ENCODE measurements at regions of chr9 and their contacts with region 1.

Region 1: DNA sequence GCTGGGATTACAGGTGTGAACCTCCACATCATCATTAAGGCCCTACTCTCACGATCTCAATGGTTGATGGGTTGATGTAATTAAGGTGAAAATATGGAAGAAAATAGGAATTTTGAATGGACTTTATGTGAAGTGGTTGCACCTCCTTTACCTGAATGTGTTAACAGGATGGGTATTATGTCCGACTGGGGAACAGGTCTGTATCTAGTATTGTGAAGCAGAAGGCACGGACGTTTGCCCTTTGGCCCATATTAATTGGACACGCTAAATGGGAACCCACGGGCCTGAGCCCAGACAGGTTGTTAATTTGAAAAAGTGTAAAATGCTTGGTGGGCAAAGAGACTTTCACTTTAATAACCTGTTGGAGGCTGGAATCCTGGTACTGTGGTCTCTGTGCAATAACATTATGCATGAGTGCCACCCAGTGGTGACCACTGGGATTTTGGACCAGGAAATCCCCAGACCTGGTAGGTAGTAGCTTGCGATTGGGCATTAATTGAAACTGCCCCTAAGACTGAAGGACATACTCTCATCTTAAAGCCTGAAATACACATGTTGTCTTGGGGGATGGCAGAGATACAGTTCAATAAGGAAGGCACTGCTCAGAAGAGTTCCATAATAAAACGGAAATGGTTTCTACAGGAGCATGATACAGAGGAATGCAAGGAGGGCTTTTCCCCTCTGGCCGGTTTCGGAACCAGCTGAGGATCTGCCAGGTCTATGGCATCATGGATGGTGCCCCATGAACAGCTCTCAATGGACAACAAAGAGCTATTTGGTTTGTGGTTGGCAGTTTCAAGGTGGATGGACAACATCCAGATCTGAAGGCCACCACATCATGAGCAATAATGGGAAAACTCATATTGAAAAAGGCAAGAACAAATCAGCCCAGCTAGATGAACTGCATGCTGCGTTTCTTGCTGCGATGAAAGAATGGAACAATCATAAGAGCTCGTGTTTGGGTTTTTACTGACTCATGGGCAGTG is 26.2 kb upstream of the BICD2 start:
- DNase-seq: peak; percentile 82
- H3K4me3 ChIP-seq: peak overlapping the region; percentile 2 to 27; a peak in 2 of 4 replicates
- H3K27ac ChIP-seq: no peak overlapping the region
- H3K4me1 ChIP-seq: no peaks in the 10 kb centered on the region; a peak in 1 of 4 replicates
- H3K27me3 ChIP-seq: peaks cover 11% of the 10 kb centered on the region
- CTCF ChIP-seq: peak; percentile 86
- EP300 ChIP-seq: no peak
- RAD21 ChIP-seq: peak; percentile 97

Region 2: DNA sequence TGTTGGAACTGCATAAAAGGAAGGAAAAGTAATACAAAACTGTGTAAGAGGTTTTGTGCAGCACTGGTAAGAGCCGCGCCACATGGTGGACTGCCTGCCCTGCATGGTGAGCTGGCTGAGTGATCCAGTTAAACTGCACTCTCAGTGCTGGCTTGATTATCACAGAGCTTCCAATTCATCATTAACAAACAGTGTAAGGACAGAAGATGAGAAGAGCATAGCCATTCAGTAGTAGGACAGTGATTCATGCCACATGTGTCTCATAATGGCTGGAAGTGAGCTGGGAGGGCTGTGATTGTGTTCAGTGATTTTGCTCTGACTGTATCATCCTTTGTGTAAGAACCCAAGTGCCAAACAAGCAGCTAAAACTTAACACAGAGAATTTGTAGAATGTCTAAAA is 322.6 kb before region 1 on chr9:
- CTCF ChIA-PET with region 1: no interaction called
- POLR2A ChIA-PET with region 1: no interaction called
- DNase-seq: no peak
- H3K4me3 ChIP-seq: no peak overlapping the region
- H3K27ac ChIP-seq: no peak overlapping the region
- H3K4me1 ChIP-seq: peaks cover 10 to 18% of the 10 kb centered on the region in 2 experiments; a peak in 2 of 4 replicates
- H3K27me3 ChIP-seq: no peaks in the 10 kb centered on the region
- CTCF ChIP-seq: no peak
- EP300 ChIP-seq: no peak
- RAD21 ChIP-seq: no peak

Region 3: DNA sequence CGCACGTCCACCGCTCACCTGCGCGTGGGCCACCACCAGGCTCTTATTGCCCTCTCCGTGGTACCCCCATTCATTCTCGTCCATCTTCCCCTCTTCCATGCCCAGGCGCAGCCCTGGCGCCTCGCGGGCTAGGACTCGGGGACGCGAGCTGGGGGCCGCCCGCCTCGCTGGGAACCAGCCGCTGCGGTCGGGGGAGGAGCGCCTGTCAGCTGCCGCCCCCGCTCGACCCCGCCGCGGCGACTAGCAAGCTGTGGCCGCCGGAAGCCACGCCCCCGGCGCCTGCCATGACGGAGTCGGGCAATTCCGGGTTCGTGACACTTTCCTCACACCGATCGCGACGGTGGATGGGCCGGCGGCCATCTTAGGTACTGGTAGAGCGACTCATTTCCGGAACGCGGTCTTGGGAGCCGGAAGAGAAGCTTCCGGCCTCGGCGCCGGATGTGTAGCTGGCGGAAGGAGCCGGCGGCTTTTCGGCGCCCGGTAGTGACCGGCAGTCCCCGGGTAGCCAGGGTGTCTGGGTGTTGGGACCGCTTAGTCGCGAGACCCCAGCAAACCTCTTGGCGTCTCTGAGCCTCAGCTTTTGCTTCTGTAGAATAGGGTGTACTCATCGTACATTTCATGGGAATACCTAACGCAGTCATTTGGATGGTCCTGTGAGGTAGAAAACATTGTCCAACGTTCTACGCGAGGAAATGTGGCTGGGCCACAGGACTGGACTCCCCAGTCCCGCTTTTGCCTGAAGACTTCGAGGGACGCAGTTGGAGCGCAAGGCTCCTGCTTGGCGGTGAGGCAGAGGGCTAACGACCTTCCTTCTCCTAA is 120.7 kb before region 1 on chr9 and contains the start of gene IPPK:
- CTCF ChIA-PET with region 1: interaction called, 11 read pairs
- POLR2A ChIA-PET with region 1: no interaction called
- DNase-seq: peak; percentile 99
- H3K4me3 ChIP-seq: peak within 1 kb of the TSS; percentile 88 to 94
- H3K27ac ChIP-seq: peak within 1 kb of the TSS; percentile 93 to 98
- H3K4me1 ChIP-seq: peaks cover 0 to 27% of the 10 kb centered on the region in 2 experiments; a peak in 2 of 4 replicates
- H3K27me3 ChIP-seq: no peaks in the 10 kb centered on the region
- CTCF ChIP-seq: no peak
- EP300 ChIP-seq: peak in 1 of 2 experiments; percentile 45; a peak in 1 of 4 replicates
- RAD21 ChIP-seq: no peak
- polyA plus RNA-seq, gene IPPK: 16.5 and 20.2 TPM in 2 replicates

Region 4: DNA sequence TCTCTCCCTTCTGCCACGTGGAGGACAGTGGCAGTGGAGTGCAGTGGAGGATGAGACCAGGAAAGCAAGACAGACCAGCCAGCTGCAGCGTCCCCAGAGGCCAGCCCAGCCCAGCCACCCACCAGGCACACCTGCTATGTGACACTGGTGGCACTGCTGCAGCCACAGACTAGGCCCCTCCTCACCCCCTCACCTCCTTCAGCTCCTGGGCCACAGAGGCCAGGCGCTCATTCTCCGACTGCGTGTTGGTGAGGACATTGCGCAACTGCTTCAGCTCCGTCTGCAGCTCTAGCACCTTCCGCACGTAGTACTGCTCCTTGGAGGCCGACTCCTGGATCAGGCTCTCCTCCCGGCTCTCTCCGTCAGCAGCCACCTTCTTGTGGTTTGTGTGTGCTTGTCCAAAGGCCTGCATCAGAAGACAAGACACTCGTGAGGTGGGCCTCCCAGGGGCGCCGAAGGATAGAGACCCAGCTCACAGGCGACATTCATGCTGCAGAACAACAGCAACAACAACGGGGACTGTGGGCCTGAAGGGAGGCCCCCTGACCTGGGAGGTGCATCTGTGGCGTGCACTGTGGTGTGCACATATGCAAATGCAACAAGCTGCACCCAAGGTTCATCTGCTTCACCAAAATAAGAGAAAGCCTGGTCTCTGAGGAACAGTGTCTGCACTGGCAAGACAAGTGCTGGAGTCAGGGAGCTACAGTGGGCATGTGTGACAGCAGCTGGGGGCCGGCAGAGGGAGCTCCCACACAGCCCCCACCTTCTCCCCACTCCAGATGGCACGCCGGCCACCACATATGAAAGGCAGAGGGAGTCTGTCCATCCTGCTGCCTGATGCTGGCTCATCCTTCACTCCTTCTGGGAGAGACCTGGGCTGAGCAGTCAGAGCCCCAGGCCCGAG is 61.8 kb before region 1 on chr9:
- CTCF ChIA-PET with region 1: interaction called, 27 read pairs
- POLR2A ChIA-PET with region 1: interaction called, 3 read pairs
- DNase-seq: peak; percentile 77
- H3K4me3 ChIP-seq: no peak overlapping the region
- H3K27ac ChIP-seq: no peak overlapping the region; a peak in 1 of 4 replicates
- H3K4me1 ChIP-seq: peaks cover 0 to 32% of the 10 kb centered on the region in 2 experiments; a peak in 2 of 4 replicates
- H3K27me3 ChIP-seq: no peaks in the 10 kb centered on the region
- CTCF ChIP-seq: peak; percentile 39; the same call in 1 of the 2 replicates
- EP300 ChIP-seq: no peak
- RAD21 ChIP-seq: peak; percentile 54

Region 5: GRCh38 chr9:92734931-92735361 is 55.9 kb before region 1 on chr9:
- CTCF ChIA-PET with region 1: interaction called, 27 read pairs
- POLR2A ChIA-PET with region 1: no interaction called
- DNase-seq: no peak
- H3K4me3 ChIP-seq: no peak overlapping the region
- H3K27ac ChIP-seq: no peak overlapping the region; a peak in 1 of 4 replicates
- H3K4me1 ChIP-seq: peaks cover 6 to 64% of the 10 kb centered on the region in 2 experiments; a peak in 3 of 4 replicates
- H3K27me3 ChIP-seq: no peaks in the 10 kb centered on the region
- CTCF ChIP-seq: no peak
- EP300 ChIP-seq: no peak
- RAD21 ChIP-seq: no peak

Region 6: GRCh38 chr9:92780206-92780605 is 10.6 kb before region 1 on chr9:
- CTCF ChIA-PET with region 1: interaction called, 14 read pairs
- POLR2A ChIA-PET with region 1: no interaction called
- DNase-seq: no peak
- H3K4me3 ChIP-seq: no peak overlapping the region
- H3K27ac ChIP-seq: no peak overlapping the region
- H3K4me1 ChIP-seq: no peaks in the 10 kb centered on the region
- H3K27me3 ChIP-seq: no peaks in the 10 kb centered on the region; the same call in 1 of the 2 replicates
- CTCF ChIP-seq: no peak
- EP300 ChIP-seq: no peak
- RAD21 ChIP-seq: no peak

Region 7: DNA sequence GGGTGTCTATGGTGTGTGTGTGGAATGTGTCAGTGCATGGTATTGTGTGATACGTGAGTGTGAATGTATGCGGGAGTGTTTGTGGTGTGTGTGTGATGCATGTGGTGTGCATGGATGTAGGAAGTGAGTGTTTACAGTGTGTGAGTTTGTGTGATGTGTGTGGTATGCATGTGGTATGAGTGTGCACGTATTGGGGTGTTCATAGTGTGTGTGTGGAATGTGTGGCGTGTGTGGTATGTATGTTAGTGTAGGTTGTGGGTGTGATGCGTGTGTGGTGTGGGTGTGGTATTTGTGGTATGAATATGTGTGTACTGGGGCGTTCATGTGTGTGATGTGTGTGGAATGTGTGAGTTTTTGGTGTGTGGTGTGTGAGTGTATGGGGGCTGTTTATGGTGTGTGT is 13.9 kb after region 1 on chr9:
- CTCF ChIA-PET with region 1: interaction called, 14 read pairs
- POLR2A ChIA-PET with region 1: no interaction called
- DNase-seq: no peak
- H3K4me3 ChIP-seq: no peak overlapping the region
- H3K27ac ChIP-seq: no peak overlapping the region
- H3K4me1 ChIP-seq: no peaks in the 10 kb centered on the region; a peak in 1 of 4 replicates
- H3K27me3 ChIP-seq: peaks cover 51% of the 10 kb centered on the region
- CTCF ChIP-seq: no peak
- EP300 ChIP-seq: no peak
- RAD21 ChIP-seq: no peak

Region 8: DNA sequence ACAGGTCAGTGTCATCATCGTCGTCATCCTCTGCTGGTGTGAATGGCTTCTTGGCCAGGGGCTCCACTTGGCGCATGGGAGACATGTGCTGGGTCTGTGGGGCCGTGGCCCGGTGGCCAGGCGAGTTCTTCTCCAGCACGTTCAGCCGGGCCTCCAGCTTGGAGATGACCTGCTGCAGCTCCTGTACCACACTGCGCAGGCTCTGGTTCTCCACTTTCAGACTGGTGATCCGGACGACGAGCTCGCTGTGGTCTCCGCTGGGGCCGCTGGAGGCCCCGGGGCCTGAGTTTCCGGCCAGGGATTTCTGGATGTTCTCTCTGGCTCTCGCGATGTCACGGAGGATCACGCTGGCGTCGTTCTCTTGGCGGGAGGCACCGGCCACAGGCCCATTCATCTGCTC is 46.4 kb after region 1 on chr9:
- CTCF ChIA-PET with region 1: no interaction called
- POLR2A ChIA-PET with region 1: no interaction called
- DNase-seq: no peak
- H3K4me3 ChIP-seq: no peak overlapping the region
- H3K27ac ChIP-seq: no peak overlapping the region
- H3K4me1 ChIP-seq: no peaks in the 10 kb centered on the region
- H3K27me3 ChIP-seq: no peaks in the 10 kb centered on the region
- CTCF ChIP-seq: no peak
- EP300 ChIP-seq: no peak
- RAD21 ChIP-seq: no peak

Measured in SK-N-SH (cell line).